Heart left ventricle (tissue), 16 donors: ENCODE measurements at regions of chr1 and their contacts with region 1.

Region 1: GRCh38 chr1:26035959-26036755 is 9.8 kb downstream of the SLC30A2 start:
- DNase-seq: peak; percentile 83 to 93 (median 89)
- ATAC-seq: peak; percentile 79 to 88 (median 82)
- H3K4me3 ChIP-seq: peak overlapping the region; percentile 66 to 97 (median 75)
- H3K27ac ChIP-seq: peak overlapping the region; percentile 60 to 97 (median 92)
- H3K4me1 ChIP-seq: peaks cover 0 to 36% (median 10%) of the 10 kb centered on the region in 12 donors
- H3K27me3 ChIP-seq: peaks cover 0 to 7% (median 0%) of the 10 kb centered on the region in 9 donors
- CTCF ChIP-seq: peak; percentile 98 to 100 (median 99)
- POLR2A ChIP-seq: no peak

Region 2: GRCh38 chr1:26083246-26083645 is 47.1 kb after region 1 on chr1:
- intact Hi-C with region 1: loop called in 1 of 10 experiments (anchors 5 kb)
- DNase-seq: peak in 4 of 5 donors; percentile 48 to 72 (median 58)
- ATAC-seq: peak; percentile 83 to 86 (median 84)
- H3K4me3 ChIP-seq: peak overlapping the region in 1 of 12 donors; percentile 8
- H3K27ac ChIP-seq: peak overlapping the region; percentile 67 to 93 (median 78)
- H3K4me1 ChIP-seq: peaks cover 0 to 37% (median 0%) of the 10 kb centered on the region in 12 donors
- H3K27me3 ChIP-seq: no peaks in the 10 kb centered on the region
- CTCF ChIP-seq: no peak
- POLR2A ChIP-seq: peak in 1 of 2 donors; percentile 48

Region 3: GRCh38 chr1:26102526-26102925 is 66.4 kb after region 1 on chr1:
- intact Hi-C with region 1: loop called in 6 of 10 experiments (anchors 2 to 5 kb)
- DNase-seq: no peak
- ATAC-seq: no peak
- H3K4me3 ChIP-seq: no peak overlapping the region
- H3K27ac ChIP-seq: no peak overlapping the region
- H3K4me1 ChIP-seq: peaks cover 0 to 11% (median 2%) of the 10 kb centered on the region in 12 donors
- H3K27me3 ChIP-seq: no peaks in the 10 kb centered on the region
- CTCF ChIP-seq: no peak
- POLR2A ChIP-seq: no peak

Region 4: GRCh38 chr1:26161415-26162219 is 125.5 kb after region 1 on chr1:
- intact Hi-C with region 1: loop called in 4 of 10 experiments (anchors 5 kb)
- DNase-seq: peak; percentile 77 to 87 (median 77)
- ATAC-seq: peak in 3 of 4 donors; percentile 25 to 69 (median 61)
- H3K4me3 ChIP-seq: peak overlapping the region; percentile 34 to 73 (median 60)
- H3K27ac ChIP-seq: peak overlapping the region in 11 of 12 donors; percentile 82 to 99 (median 92)
- H3K4me1 ChIP-seq: peaks cover 6 to 77% (median 44%) of the 10 kb centered on the region in 12 donors
- H3K27me3 ChIP-seq: peaks cover 0 to 38% (median 0%) of the 10 kb centered on the region in 9 donors
- CTCF ChIP-seq: peak in 6 of 12 donors; percentile 35 to 50 (median 44)
- POLR2A ChIP-seq: peak in 1 of 2 donors; percentile 64

Region 5: DNA sequence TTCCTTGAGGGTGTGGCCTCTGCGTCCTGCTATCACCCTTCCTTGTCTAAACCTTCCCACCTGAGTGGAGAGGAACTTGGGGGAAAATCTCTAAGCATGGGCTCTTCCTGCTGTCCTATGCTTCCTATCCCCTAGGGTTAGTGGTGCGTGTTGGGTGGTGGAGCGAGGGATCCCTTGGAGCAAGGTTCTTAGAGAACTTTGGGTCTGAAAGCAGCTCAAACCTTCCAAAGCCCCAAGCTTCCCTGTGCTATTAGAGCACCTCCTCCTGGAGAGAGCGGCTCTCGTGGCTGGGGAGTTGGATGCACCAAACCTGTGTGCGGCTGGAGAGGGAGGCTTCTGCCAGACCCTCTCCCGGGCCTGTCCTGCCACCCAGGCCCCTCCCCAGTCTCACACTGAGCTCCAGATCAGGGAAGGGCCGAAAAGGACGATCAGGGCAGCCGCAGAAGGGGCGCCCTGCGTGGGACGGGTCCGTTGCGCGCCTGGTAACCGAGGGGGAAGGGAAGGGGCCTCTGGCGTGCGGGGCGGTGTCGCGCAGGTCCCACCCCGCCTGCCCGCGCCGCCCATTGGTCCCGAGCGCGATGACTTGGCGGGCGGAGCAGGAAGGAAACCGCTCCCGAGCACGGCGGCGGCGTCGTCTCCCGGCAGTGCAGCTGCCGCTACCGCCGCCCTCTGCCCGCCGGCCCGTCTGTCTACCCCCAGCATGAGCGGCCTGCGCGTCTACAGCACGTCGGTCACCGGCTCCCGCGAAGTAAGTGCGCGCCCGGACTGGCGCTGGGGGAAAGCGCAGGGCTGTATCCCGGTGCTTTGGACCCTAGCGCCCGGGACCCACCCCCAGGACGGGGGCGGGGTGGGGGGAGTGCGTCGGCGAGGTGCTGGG is 243.5 kb after region 1 on chr1 and contains the start of gene SH3BGRL3:
- intact Hi-C with region 1: loop called in 1 of 10 experiments (anchors 5 kb)
- DNase-seq: peak; percentile 92 to 94 (median 92)
- ATAC-seq: peak; percentile 51 to 85 (median 80)
- H3K4me3 ChIP-seq: peak within 1 kb of the TSS; percentile 56 to 99 (median 74)
- H3K27ac ChIP-seq: peak within 1 kb of the TSS; percentile 60 to 98 (median 92)
- H3K4me1 ChIP-seq: peaks cover 8 to 93% (median 70%) of the 10 kb centered on the region in 12 donors
- H3K27me3 ChIP-seq: no peaks in the 10 kb centered on the region
- CTCF ChIP-seq: peak in 10 of 12 donors; percentile 19 to 67 (median 33)
- POLR2A ChIP-seq: peak; percentile 32 to 94
- total RNA-seq, gene SH3BGRL3: 22.4 to 234 (median 40.0) TPM